Thyroid gland (tissue), 4 donors: ENCODE measurements at regions of chr5 and their contacts with region 1.

Region 1: DNA sequence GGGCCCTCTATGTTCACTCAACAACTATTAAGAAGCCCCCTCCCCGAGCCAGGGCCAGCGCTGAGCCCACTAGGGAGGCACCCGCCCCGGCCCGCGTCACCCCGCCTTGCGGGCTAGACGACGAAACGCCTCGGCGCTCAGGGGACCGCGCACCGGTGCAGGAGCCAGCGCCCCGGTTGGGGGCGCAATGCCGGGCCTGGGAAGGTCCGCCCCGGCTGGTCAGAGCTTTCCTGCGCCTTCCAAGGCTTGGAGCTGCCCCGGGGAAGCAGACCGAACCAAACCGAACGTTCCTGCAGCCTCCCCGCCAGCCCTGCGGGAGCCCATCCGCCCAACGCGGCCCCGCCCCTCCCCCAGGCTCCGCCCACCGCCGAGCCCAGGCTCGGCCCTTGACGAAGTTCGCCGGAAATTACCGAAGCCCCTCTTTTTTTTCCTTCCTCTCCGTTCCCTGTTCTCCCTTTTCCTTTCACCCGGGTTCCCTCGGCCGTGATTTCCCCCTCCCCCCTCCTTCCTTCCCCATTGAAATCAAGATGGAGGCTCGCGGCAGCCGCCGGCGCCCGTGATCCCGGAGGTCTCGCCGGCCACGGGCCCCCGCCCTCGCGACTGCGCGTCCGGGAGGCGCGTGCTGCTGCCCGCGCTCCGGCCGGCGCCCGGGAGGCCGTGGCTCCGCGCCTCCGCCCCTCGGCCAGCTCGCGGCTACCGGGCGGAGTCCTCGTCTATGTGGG is at the start of gene TRIO:
- DNase-seq: peak; percentile 87 to 88
- H3K4me3 ChIP-seq: peak within 1 kb of the TSS; percentile 68 to 86 (median 78)
- H3K27ac ChIP-seq: peak within 1 kb of the TSS; percentile 75 to 94 (median 92)
- H3K4me1 ChIP-seq: peaks cover 14 to 22% of the 10 kb centered on the region in 2 donors
- H3K27me3 ChIP-seq: no peaks in the 10 kb centered on the region
- CTCF ChIP-seq: peak in 4 of 6 experiments; percentile 31 to 60 (median 52)
- POLR2A ChIP-seq: peak; percentile 61 to 86
- total RNA-seq, gene TRIO: 67.4 to 103 (median 94.7) TPM

Region 2: DNA sequence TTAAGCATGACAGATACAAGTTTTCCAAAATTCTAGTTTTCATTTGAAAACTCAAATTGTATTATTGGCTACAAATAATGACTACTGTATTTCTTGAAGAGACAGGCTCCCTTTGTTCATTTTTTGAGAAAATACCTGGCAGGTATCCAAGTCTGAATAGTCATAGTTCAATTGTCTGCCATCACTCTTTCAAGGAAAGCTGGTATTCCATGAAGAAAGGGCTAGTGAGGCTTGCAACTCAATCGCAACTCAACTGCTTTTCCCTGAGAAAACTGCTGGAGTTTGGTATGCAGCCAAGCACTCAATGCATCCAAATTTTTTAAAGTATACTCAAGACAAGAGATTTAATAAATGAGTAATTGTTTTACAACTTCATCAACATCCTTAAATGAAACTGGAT is 61.2 kb before region 1 on chr5:
- intact Hi-C with region 1: no loop called
- DNase-seq: no peak
- H3K4me3 ChIP-seq: no peak overlapping the region
- H3K27ac ChIP-seq: no peak overlapping the region
- H3K4me1 ChIP-seq: no peaks in the 10 kb centered on the region
- H3K27me3 ChIP-seq: no peaks in the 10 kb centered on the region
- CTCF ChIP-seq: no peak
- POLR2A ChIP-seq: no peak

Region 3: DNA sequence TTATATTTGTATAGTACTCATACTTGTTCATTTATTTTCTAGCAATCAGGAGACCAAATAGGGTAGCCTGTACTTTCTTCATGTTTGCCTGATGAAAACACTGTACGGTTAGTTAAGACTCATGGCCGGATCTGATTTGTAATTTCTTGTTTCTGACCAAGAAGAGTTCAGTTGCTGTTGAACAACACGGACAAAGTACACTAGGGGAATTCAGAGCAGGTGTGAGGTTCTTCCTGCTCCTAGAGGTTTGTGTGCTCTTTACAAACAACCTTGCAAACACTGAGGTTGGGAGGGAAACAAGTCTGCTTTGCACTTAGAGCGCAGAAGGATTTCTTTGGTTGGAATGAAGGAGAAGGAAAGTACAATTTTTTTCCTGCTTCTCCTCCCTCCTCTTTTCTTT is 69.8 kb after region 1 on chr5:
- intact Hi-C with region 1: no loop called
- DNase-seq: no peak
- H3K4me3 ChIP-seq: no peak overlapping the region
- H3K27ac ChIP-seq: no peak overlapping the region
- H3K4me1 ChIP-seq: peaks cover 7 to 40% of the 10 kb centered on the region in 2 donors
- H3K27me3 ChIP-seq: no peaks in the 10 kb centered on the region
- CTCF ChIP-seq: no peak
- POLR2A ChIP-seq: no peak

Region 4: DNA sequence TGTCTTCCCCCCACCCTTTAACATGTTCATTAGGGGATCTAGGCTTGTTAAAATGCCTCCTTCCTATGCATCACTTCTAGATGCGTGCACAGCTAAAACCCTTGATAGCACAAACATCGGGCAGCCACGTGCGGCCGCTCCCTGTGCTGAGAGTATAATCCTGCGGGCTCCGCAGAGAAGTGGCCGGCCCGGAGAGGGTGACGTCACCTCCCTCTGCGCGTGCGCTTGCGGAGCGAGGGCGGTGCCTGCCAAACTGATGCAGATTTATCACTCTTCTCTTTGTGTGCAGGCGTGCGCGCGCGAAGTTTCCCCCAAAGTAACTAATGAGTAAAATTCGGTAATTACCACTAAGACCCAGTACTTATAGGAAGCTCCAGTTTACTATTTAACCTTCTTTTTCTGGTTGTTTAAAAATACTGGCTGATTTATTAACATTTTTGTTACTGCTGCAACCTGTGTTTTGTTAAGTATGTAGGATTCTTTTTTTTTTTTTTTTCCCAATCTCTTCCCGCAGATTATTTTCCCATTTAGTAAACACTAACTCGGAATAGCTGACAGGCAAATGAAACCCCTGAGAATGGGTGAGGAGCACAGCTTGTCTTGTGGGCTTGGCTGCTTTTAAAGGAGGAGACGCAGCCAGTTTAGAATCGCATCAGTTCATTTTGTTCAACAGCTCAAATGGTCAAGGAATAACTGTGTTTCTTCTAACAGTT is 121.8 kb after region 1 on chr5:
- intact Hi-C with region 1: loop called (anchors 10 kb)
- DNase-seq: peak; percentile 90 to 91
- H3K4me3 ChIP-seq: no peak overlapping the region
- H3K27ac ChIP-seq: no peak overlapping the region
- H3K4me1 ChIP-seq: peaks cover 22 to 32% of the 10 kb centered on the region in 2 donors
- H3K27me3 ChIP-seq: no peaks in the 10 kb centered on the region
- CTCF ChIP-seq: no peak
- POLR2A ChIP-seq: peak in 1 of 2 donors; percentile 55

Region 5: GRCh38 chr5:14447958-14448911 is 305.2 kb after region 1 on chr5:
- intact Hi-C with region 1: no loop called
- DNase-seq: peak; percentile 28 to 35
- H3K4me3 ChIP-seq: no peak overlapping the region
- H3K27ac ChIP-seq: peak overlapping the region; percentile 2 to 64 (median 29)
- H3K4me1 ChIP-seq: peaks cover 13 to 27% of the 10 kb centered on the region in 2 donors
- H3K27me3 ChIP-seq: no peaks in the 10 kb centered on the region
- CTCF ChIP-seq: no peak
- POLR2A ChIP-seq: no peak